ENCODE measurements at regions of chr2 and their contacts with region 1.

Region 1: DNA sequence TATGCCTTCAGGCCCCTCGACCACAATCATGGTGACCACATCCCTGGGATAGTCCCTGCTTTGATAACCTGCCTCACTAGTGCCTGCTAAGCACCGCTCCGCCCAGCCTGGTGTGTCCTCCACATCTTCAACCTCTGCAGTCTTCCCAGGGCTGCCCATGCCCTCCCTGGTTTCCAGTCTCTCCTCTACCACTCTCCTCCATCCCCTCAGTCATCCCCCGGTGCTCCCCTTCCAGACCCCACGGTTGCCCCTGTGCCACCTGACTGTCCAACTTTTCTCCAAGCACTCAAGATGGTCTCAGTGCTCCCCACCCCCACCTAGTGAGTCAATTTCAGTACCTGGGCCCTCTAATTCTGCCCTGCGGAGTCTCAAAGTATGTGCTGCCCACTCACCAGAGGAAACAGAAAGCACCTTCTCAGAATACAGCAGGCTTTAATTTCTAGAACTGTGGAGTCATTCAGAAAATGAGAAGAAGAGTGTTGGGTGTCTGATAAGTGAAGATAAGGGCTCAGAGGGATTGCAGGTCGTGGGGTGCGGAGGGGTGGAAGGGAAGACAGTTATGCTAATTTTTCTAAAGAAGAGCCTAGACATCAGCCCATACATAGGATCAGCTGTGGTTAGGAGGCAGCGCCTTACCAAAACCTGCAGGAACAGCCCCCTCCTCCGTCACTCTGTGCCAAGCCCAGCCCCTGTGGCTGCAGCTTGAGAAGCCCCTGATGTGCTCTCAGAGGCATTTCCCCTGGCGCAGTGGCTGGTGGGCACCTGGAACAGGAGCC is 53.6 kb upstream of the CAB39 start:
- DNase-seq: peak; percentile 70
- H3K4me3 Mint-ChIP-seq: peak overlapping the region; percentile 84
- H3K27ac Mint-ChIP-seq: peak overlapping the region; percentile 99
- H3K4me1 Mint-ChIP-seq: peaks cover 91% of the 10 kb centered on the region
- H3K27me3 Mint-ChIP-seq: no peaks in the 10 kb centered on the region

Region 2: GRCh38 chr2:230225486-230225885 is 433.6 kb before region 1 on chr2 and contains the start of gene SP140:
- intact Hi-C with region 1: loop called (anchors 1 kb)
- DNase-seq: peak; percentile 80
- H3K4me3 Mint-ChIP-seq: peak within 1 kb of the TSS; percentile 91
- H3K27ac Mint-ChIP-seq: peak within 1 kb of the TSS; percentile 98
- H3K4me1 Mint-ChIP-seq: peaks cover 63% of the 10 kb centered on the region
- H3K27me3 Mint-ChIP-seq: no peaks in the 10 kb centered on the region
- total RNA-seq, gene SP140: 235 and 243 TPM in 2 replicates

Region 3: DNA sequence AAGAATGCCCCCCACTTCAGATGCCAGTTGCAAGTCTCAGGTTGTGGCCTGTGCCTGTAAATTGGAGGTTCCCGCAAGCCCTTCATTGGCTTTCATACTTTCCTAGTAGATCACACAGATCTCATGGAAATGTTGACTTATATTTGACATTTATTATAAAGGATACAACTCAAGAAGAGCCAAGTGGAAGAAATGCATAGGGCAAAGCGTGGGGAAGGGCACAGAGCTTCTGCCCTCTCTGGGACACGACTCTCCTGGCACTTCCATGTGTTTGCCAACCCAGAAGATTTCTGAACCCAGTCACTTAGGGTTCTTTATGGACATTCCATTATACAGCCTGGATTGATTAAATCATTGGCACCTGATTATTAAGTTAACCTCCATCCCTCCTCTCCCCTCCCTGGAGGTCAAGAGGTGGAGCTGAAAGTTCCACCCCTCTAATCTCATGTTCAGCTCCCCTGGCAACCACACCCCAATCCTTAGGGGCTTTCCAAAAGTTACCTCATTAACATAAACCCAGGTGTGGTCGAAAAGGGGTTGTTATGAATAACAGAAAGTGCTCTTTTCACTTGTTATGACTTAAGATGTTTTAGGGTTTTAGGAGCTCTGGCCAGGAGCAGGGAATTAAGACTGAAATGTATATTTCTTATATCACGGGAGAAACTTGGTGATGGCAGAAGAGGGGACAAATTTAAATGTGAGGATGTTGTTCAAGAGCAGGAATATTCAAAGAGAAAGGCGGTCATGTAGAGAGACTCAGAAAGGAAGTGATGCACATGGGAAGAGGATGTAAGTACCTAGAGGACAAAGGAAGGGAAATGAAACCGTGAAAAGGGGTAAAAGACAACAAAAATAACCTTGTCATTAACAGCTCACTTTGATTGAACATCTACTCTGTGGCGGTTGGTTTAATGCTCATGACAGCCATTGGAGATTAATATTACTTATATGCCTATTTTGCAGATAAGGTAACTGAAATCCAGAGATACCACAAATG is 211.3 kb before region 1 on chr2:
- intact Hi-C with region 1: loop called (anchors 1 kb)
- DNase-seq: peak; percentile 40
- H3K4me3 Mint-ChIP-seq: peak overlapping the region; percentile 58
- H3K27ac Mint-ChIP-seq: peak overlapping the region; percentile 96
- H3K4me1 Mint-ChIP-seq: peaks cover 71% of the 10 kb centered on the region
- H3K27me3 Mint-ChIP-seq: no peaks in the 10 kb centered on the region

Region 4: GRCh38 chr2:230636684-230637271 is 22.3 kb before region 1 on chr2:
- intact Hi-C with region 1: loop called (anchors 1 kb)
- DNase-seq: no peak
- H3K4me3 Mint-ChIP-seq: peak overlapping the region; percentile 15
- H3K27ac Mint-ChIP-seq: peak overlapping the region; percentile 83
- H3K4me1 Mint-ChIP-seq: peaks cover 31% of the 10 kb centered on the region
- H3K27me3 Mint-ChIP-seq: no peaks in the 10 kb centered on the region

Region 5: DNA sequence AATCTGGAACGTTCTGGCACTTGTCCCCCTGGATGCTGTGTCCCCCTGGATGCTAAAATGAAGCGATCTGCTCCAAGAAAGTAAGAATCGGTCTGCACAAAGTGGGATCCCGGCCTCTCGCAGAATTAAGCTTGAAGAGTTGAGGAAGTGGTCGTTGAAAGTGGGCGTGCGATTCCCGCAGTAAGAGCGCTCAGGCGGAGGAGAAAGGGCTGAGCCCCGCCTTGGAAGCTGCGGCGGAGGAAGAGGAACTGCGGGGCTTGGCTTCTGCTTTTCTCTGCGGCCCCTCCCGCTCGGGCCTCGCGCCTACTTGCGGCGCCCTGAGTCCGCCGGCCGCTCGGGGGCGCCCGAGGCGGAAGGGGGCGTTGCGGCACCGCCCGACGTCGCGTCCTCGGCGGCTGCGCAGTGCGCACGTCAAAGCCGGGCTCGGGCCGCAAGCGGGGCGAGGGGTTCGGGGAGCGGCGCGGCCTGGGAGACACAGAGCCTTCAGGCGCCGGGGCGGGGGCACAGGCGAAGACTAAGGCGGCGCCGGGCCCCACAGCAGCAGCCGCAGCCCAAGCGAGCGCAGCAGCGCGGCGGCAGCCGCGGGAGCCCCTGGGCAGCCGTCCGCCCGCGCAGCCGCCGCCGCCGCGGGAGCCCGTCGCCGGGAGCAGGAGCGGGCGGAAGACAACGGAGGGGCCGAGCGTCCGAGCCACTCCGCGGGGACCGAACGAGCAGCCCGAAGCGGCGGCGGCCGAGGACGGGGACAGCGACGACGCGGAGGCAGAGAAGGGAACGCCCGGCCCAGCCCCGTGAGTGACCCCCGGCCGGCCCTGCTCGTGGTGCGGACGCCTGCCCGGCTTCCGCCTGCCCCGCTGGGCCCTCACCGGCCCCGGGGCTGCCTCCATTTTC is 53.6 kb after region 1 on chr2 and contains the start of gene CAB39:
- intact Hi-C with region 1: loop called (anchors 1 kb)
- DNase-seq: peak; percentile 89
- H3K4me3 Mint-ChIP-seq: peak within 1 kb of the TSS; percentile 99
- H3K27ac Mint-ChIP-seq: peak within 1 kb of the TSS; percentile 98
- H3K4me1 Mint-ChIP-seq: peaks cover 44% of the 10 kb centered on the region
- H3K27me3 Mint-ChIP-seq: no peaks in the 10 kb centered on the region
- total RNA-seq, gene CAB39: 168 and 170 TPM in 2 replicates

Region 6: GRCh38 chr2:230908595-230909191 is 249.6 kb after region 1 on chr2:
- intact Hi-C with region 1: loop called (anchors 5 kb)
- DNase-seq: no peak
- H3K4me3 Mint-ChIP-seq: no peak overlapping the region
- H3K27ac Mint-ChIP-seq: peak overlapping the region; percentile 29
- H3K4me1 Mint-ChIP-seq: peaks cover 41% of the 10 kb centered on the region
- H3K27me3 Mint-ChIP-seq: peaks cover 59% of the 10 kb centered on the region